ENCODE measurements at regions of chr19 and their contacts with region 1.

Region 1: GRCh38 chr19:925526-926322 is at the start of gene ARID3A:
- DNase-seq: peak; percentile 82 to 89
- H3K4me3 ChIP-seq: peak within 1 kb of the TSS; percentile 80 to 87
- H3K27ac ChIP-seq: peak within 1 kb of the TSS; percentile 61 to 74
- H3K4me1 ChIP-seq: peaks cover 0 to 36% (median 24%) of the 10 kb centered on the region in 4 donors
- H3K27me3 ChIP-seq: peaks cover 0 to 14% of the 10 kb centered on the region in 2 donors
- CTCF ChIP-seq: no peak

Region 2: DNA sequence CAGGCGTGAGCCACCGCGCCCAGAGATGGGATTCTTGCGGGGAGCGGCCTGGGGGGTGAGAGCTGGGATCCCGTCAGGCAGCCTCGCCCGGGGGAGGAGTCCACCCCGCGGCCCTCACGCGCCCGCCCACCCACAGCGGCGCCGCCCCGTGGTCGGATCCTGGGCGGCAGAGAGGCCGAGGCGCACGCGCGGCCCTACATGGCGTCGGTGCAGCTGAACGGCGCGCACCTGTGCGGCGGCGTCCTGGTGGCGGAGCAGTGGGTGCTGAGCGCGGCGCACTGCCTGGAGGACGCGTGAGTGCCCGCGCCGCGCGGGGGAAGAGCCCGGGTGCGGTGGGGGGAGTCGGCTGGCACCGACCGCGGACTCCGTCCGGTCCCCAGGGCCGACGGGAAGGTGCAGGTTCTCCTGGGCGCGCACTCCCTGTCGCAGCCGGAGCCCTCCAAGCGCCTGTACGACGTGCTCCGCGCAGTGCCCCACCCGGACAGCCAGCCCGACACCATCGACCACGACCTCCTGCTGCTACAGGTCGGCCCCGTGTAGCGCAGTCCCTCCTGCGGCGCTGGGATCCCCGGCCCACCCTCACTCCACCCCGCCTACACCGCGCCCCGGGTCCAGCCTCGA is 65.1 kb before region 1 on chr19:
- intact Hi-C with region 1: loop called (anchors 1 kb)
- DNase-seq: peak; percentile 77 to 84
- H3K4me3 ChIP-seq: peak overlapping the region; percentile 37 to 43
- H3K27ac ChIP-seq: no peak overlapping the region
- H3K4me1 ChIP-seq: peaks cover 0 to 31% (median 18%) of the 10 kb centered on the region in 4 donors
- H3K27me3 ChIP-seq: peaks cover 0 to 58% of the 10 kb centered on the region in 2 donors
- CTCF ChIP-seq: no peak

Region 3: DNA sequence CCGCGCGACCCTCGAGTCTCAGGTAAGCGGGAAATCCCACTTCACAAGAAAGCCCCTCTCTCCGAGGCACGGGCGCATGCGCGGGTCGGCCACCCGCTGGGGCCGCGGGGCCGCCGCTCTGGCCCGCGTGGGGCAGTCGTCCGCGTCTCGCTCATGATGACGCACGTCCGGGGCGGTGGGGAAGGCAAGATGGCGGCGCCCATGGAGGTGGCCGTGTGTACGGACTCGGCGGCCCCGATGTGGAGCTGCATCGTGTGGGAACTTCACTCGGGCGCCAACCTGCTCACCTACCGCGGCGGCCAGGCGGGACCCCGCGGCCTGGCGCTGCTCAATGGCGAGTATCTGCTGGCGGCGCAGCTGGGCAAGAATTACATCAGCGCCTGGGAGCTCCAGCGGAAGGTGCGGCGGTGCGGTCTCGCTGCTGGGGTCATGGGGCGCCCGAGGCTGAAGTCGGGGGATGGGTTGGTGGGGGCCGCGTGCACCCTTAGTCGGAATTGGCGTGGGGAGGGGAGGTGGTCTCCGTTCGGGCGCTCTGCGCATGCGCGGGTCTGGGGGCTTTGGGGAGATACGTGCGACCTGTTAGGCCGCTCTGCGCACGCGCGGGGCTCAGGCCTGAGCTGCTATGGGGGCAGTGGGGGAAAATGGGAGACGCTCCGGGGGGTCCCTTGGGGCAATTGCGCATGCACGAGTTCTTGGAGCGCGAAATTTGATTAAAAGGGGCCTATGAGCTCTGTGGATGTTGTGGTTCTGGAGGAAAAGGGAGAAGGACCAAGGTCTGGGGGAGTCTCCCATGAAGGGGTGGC is 58.6 kb after region 1 on chr19 and contains the start of gene WDR18:
- intact Hi-C with region 1: loop called (anchors 1 kb)
- DNase-seq: peak; percentile 93 to 96
- H3K4me3 ChIP-seq: peak within 1 kb of the TSS; percentile 94 to 96
- H3K27ac ChIP-seq: peak within 1 kb of the TSS; percentile 82 to 87
- H3K4me1 ChIP-seq: peaks cover 0 to 35% (median 20%) of the 10 kb centered on the region in 4 donors
- H3K27me3 ChIP-seq: peaks cover 0 to 11% of the 10 kb centered on the region in 2 donors
- CTCF ChIP-seq: peak in 1 of 2 experiments; percentile 44

Region 4: DNA sequence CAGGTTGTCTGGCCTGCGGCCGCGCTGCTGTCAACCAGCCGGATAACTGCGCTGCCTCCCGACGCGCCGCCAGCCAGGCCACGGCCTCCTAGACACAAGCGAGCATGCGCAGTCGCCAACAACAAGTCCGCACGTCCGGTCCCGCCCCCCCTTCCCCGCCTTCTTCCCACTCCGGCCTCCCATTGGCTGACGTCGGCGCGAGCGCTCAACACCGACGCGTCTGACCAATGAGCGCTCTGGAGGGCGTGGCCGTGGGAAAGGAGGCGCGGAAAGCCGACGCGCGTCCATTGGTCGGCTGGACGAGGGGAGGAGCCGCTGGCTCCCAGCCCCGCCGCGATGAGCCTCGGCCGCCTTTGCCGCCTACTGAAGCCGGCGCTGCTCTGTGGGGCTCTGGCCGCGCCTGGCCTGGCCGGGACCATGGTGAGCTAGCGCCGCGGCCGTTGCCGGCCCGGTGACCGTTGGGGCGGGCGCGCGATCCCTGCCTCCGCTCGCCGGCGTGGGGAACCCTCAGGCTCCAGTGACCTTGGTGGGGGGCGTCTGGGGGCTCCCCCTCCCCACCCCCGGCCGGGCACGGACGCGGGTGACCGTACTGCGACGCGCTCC is 178.1 kb after region 1 on chr19 and contains the start of gene GPX4:
- intact Hi-C with region 1: loop called (anchors 10 kb)
- DNase-seq: peak; percentile 99 to 100
- H3K4me3 ChIP-seq: peak within 1 kb of the TSS; percentile 95 to 98
- H3K27ac ChIP-seq: peak within 1 kb of the TSS; percentile 99 to 100
- H3K4me1 ChIP-seq: peaks cover 7 to 77% (median 63%) of the 10 kb centered on the region in 4 donors
- H3K27me3 ChIP-seq: no peaks in the 10 kb centered on the region
- CTCF ChIP-seq: peak in 1 of 2 experiments; percentile 6